Activated B cell treated with CpG ODN at 0.5 μM for 24 hours (primary cell): ENCODE measurements at regions of chr10 and their contacts with region 1.

Region 1: GRCh38 chr10:132371641-132372081 is 25.3 kb upstream of the PWWP2B start:
- DNase-seq: no peak
- ATAC-seq: no peak
- H3K4me3 Mint-ChIP-seq: no peak overlapping the region
- H3K27ac Mint-ChIP-seq: no peak overlapping the region
- H3K4me1 Mint-ChIP-seq: no peaks in the 10 kb centered on the region
- H3K27me3 Mint-ChIP-seq: peaks cover 7% of the 10 kb centered on the region
- CTCF ChIP-seq: no peak

Region 2: GRCh38 chr10:131891196-131891928 is 480.3 kb before region 1 on chr10:
- CTCF ChIA-PET with region 1: no interaction called
- POLR2A ChIA-PET with region 1: no interaction called
- intact Hi-C with region 1: no loop called
- DNase-seq: no peak
- ATAC-seq: no peak
- H3K4me3 Mint-ChIP-seq: no peak overlapping the region
- H3K27ac Mint-ChIP-seq: no peak overlapping the region
- H3K4me1 Mint-ChIP-seq: no peaks in the 10 kb centered on the region
- H3K27me3 Mint-ChIP-seq: peaks cover 11% of the 10 kb centered on the region
- CTCF ChIP-seq: no peak

Region 3: GRCh38 chr10:132223156-132223590 is 148.5 kb before region 1 on chr10:
- CTCF ChIA-PET with region 1: no interaction called
- POLR2A ChIA-PET with region 1: no interaction called
- intact Hi-C with region 1: loop called (anchors 5 kb)
- DNase-seq: peak; percentile 43
- ATAC-seq: peak; percentile 97
- H3K4me3 Mint-ChIP-seq: no peak overlapping the region
- H3K27ac Mint-ChIP-seq: no peak overlapping the region
- H3K4me1 Mint-ChIP-seq: peaks cover 2% of the 10 kb centered on the region
- H3K27me3 Mint-ChIP-seq: no peaks in the 10 kb centered on the region
- CTCF ChIP-seq: no peak